HAP-1 (cell line): ENCODE measurements at regions of chr2 and their contacts with region 1.

Region 1: GRCh38 chr2:77521931-77522470 is at the start of gene LRRTM4:
- DNase-seq: peak; percentile 21 to 43
- H3K4me3 ChIP-seq: no peak within 1 kb of the TSS
- H3K4me1 ChIP-seq: peaks cover 7% of the 10 kb centered on the region
- H3K27me3 ChIP-seq: no peaks in the 10 kb centered on the region

Region 2: GRCh38 chr2:77161009-77161408 is 361.0 kb before region 1 on chr2:
- in situ Hi-C with region 1: no loop called
- DNase-seq: no peak
- H3K4me3 ChIP-seq: no peak overlapping the region
- H3K4me1 ChIP-seq: no peaks in the 10 kb centered on the region
- H3K27me3 ChIP-seq: no peaks in the 10 kb centered on the region

Region 3: DNA sequence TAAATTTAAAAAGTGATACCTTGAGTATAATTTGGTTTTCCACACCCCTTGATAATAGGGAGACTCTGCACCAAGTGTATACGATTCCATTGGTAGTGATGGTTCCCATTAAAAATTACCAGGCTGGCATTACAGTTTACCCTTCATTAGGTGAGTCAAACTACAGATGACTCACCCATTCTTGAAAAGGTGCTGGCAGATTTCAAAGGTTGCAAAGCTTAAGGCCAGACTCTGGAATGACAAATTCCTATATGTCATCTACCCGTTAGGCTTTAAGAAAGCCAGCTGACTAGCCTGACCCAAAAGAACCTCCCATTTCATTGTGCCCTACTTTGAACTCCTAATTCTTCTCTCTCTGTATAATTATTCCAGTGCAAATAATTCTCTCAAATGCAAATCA is 124.2 kb before region 1 on chr2:
- in situ Hi-C with region 1: loop called (anchors 25 kb)
- DNase-seq: no peak
- H3K4me3 ChIP-seq: no peak overlapping the region
- H3K4me1 ChIP-seq: no peaks in the 10 kb centered on the region
- H3K27me3 ChIP-seq: no peaks in the 10 kb centered on the region